Ovary (tissue), 10 donors: ENCODE measurements at regions of chr16 and their contacts with region 1.

Region 1: GRCh38 chr16:35598696-35599332 is 2139.4 kb downstream of the TP53TG3F start:
- DNase-seq: no peak
- H3K4me3 ChIP-seq: no peak overlapping the region
- H3K27ac ChIP-seq: no peak overlapping the region
- H3K4me1 ChIP-seq: no peaks in the 10 kb centered on the region
- H3K27me3 ChIP-seq: no peaks in the 10 kb centered on the region
- CTCF ChIP-seq: no peak
- EP300 ChIP-seq: no peak
- POLR2A ChIP-seq: no peak

Region 2: DNA sequence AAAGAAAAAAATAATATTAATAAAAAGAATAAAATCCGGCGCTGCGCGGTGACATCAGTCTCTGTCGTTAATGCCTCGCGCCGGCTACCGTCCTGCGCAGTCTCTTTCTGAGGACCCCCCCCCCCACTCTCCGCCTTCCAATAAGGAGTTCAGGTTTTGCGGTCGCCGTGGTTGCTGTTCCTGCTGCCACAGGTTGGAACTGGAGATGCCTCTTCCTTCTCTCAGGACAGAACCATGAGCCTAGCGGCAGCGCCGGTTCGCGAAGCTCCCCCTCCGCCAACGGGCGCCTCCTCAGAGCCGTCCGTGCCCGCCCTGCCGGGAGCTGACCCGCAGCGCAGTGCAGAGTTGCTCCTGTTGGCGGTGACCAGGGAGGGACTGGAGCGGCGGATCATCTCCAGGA is 46.1 kb before region 1 on chr16:
- intact Hi-C with region 1: loop called in 1 of 4 experiments (anchors 5 kb)
- DNase-seq: no peak
- H3K4me3 ChIP-seq: no peak overlapping the region
- H3K27ac ChIP-seq: no peak overlapping the region
- H3K4me1 ChIP-seq: no peaks in the 10 kb centered on the region
- H3K27me3 ChIP-seq: no peaks in the 10 kb centered on the region
- CTCF ChIP-seq: no peak
- EP300 ChIP-seq: no peak
- POLR2A ChIP-seq: no peak

Region 3: DNA sequence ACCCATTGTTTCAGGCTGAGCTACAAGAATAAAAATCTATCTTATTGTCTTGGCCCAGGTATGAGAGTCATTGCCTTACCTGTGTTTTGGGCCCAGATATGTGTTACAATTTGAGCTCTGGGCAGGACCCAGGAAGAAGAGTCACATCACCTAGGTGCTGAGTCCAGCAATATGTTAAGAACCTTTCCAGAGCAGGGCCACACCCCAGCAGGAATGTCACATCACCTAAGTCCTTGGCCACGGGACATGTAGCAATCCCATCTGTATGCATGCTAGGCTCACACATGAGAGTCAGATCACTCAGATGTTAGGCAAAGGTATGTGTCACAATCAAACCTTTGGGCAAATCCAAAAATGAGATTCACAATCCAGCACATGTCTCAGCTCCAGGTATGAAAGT is 35.9 kb before region 1 on chr16:
- intact Hi-C with region 1: loop called in 1 of 4 experiments (anchors 1 kb)
- DNase-seq: no peak
- H3K4me3 ChIP-seq: no peak overlapping the region
- H3K27ac ChIP-seq: no peak overlapping the region
- H3K4me1 ChIP-seq: no peaks in the 10 kb centered on the region
- H3K27me3 ChIP-seq: no peaks in the 10 kb centered on the region
- CTCF ChIP-seq: no peak
- EP300 ChIP-seq: no peak
- POLR2A ChIP-seq: no peak

Region 4: GRCh38 chr16:35733971-35734702 is 135.3 kb after region 1 on chr16:
- intact Hi-C with region 1: no loop called
- DNase-seq: no peak
- H3K4me3 ChIP-seq: no peak overlapping the region
- H3K27ac ChIP-seq: no peak overlapping the region
- H3K4me1 ChIP-seq: no peaks in the 10 kb centered on the region
- H3K27me3 ChIP-seq: no peaks in the 10 kb centered on the region
- CTCF ChIP-seq: no peak
- EP300 ChIP-seq: no peak
- POLR2A ChIP-seq: no peak